PC-3 (cell line): ENCODE measurements at regions of chr14 and their contacts with region 1.

Region 1: GRCh38 chr14:59664741-59665140 is 88.1 kb upstream of the CCDC175 start:
- DNase-seq: peak; percentile 87
- ATAC-seq: no peak
- H3K4me3 ChIP-seq: no peak overlapping the region
- H3K27ac ChIP-seq: no peak overlapping the region
- H3K4me1 ChIP-seq: no peaks in the 10 kb centered on the region
- H3K27me3 ChIP-seq: peaks cover 22% of the 10 kb centered on the region; the same call in 1 of the 2 replicates
- CTCF ChIP-seq: no peak

Region 2: DNA sequence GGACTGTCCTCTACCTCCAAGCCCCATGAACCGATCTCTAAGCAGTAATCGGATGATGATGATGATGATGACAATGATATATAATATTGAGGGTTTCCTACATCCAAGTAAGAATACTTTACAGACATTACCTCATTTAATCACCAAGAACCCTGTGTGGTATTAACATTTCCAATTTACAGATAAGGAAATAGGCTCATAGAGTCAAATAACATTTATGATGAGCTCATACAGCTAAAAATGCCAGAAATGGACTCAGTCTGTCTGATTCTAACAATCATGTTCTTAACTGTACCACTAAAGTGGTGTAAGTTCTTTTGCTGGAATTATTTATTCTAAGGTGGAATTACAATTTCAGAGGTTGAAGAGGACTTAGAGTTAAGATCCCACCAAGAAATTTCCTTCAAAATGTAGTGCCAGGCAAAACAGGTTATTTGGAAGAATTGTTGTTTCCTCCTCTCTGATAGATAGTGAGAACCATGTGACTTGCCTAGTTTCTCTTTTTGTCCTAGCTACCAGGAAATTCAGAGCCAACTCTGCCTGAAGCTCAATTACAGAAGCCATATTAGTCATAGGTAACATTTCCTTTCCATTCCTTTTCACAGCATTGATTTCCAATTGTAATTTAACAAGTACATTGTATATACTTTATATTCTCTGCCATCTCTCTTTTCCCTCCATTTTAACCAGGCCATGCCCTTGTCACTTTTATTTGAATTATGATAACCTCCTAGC is 64.4 kb before region 1 on chr14:
- CTCF ChIA-PET with region 1: no interaction called
- POLR2A ChIA-PET with region 1: no interaction called
- intact Hi-C with region 1: no loop called
- DNase-seq: no peak
- ATAC-seq: no peak
- H3K4me3 ChIP-seq: no peak overlapping the region
- H3K27ac ChIP-seq: no peak overlapping the region
- H3K4me1 ChIP-seq: no peaks in the 10 kb centered on the region
- H3K27me3 ChIP-seq: peaks cover 92% of the 10 kb centered on the region
- CTCF ChIP-seq: no peak

Region 3: GRCh38 chr14:59688224-59689170 is 23.8 kb after region 1 on chr14:
- CTCF ChIA-PET with region 1: no interaction called
- POLR2A ChIA-PET with region 1: interaction called, 11 read pairs
- intact Hi-C with region 1: no loop called
- DNase-seq: peak; percentile 94
- ATAC-seq: peak; percentile 100
- H3K4me3 ChIP-seq: no peak overlapping the region
- H3K27ac ChIP-seq: no peak overlapping the region
- H3K4me1 ChIP-seq: no peaks in the 10 kb centered on the region
- H3K27me3 ChIP-seq: peaks cover 54% of the 10 kb centered on the region
- CTCF ChIP-seq: peak; percentile 99